Psoas muscle (tissue), 8 donors: ENCODE measurements at regions of chr9 and their contacts with region 1.

Region 1: DNA sequence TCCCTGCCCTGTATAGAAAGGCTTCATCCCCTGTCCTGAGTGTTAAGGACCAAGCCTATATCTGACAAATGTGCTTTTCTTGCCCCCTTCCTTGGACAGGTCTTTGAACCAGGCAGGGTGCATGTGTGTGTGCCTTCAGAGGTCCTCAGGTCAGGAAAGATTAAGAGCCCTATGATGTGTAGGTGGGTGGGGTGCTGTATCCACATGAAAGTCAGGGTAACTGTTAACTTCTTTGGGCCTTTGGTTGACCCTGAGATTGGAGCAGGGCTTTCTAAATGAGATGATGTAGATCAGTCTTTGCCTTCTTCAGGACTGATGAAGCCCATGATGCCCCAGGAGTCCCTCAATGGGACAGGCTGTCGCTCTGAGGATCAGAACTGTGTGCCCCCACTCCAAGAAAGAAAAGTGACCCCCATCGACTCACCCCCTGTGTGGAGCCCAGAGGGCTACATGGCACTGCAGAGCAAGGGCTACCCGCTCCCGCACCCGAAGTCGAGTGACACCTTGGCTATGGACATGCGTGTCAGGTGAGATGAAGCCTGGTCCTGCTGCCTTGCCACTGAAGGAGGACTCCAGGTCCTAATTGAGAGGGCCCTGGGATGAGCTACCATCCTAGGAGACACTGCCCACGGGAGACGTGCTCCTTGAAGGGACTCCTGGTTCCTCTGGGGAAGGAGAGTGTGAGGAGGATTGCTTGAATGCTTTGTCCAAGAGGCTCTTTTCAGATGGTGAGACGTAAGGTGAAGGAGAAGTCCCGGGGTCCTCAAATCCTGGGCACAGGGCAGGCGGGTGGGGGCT is 29.3 kb upstream of the POMT1 start:
- DNase-seq: peak in 1 of 2 donors; percentile 35
- ATAC-seq: no peak
- H3K4me3 ChIP-seq: no peak overlapping the region
- H3K27ac ChIP-seq: no peak overlapping the region
- H3K4me1 ChIP-seq: peaks cover 15% of the 10 kb centered on the region
- H3K27me3 ChIP-seq: no peaks in the 10 kb centered on the region
- CTCF ChIP-seq: no peak

Region 2: DNA sequence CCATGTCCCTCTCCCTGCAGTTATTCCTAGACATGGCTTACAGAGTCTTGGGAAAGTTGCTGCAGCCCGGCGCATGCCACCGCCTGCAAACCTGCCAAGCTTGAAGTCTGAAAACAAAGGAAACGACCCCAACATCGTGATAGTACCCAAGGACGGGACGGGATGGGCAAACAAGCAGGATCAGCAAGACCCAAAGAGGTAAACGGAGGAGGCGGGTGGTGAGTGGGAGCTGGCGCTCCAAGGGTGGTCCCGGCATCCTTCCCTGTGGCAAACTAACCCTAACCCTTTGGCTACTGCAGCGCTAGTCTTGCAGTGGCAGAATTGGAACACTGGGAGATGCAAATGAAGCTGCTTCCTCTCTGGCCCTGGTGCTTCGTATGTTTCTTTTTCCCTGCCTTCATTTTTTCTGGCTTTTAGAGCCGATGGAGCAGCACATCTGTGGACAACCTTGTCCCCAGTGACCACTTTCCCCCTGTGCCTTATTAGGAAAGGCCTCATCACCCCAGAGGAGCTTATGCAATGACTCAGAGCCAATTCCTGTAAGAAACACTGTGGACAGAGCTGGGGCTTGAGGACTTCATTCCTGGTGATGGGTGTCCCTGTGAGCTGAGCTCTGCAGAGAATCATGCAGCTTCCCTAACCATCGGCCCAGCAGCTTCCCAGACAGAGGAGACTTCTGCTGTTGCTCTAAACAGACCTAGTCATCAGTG is 40.6 kb before region 1 on chr9:
- intact Hi-C with region 1: loop called in 1 of 2 experiments (anchors 5 kb)
- DNase-seq: no peak
- ATAC-seq: peak in 2 of 4 donors; percentile 44 to 61
- H3K4me3 ChIP-seq: no peak overlapping the region
- H3K27ac ChIP-seq: no peak overlapping the region
- H3K4me1 ChIP-seq: peaks cover 27% of the 10 kb centered on the region
- H3K27me3 ChIP-seq: no peaks in the 10 kb centered on the region
- CTCF ChIP-seq: no peak

Region 3: GRCh38 chr9:131491001-131491710 is 17.8 kb after region 1 on chr9:
- intact Hi-C with region 1: no loop called
- DNase-seq: no peak
- ATAC-seq: no peak
- H3K4me3 ChIP-seq: no peak overlapping the region
- H3K27ac ChIP-seq: no peak overlapping the region
- H3K4me1 ChIP-seq: no peaks in the 10 kb centered on the region
- H3K27me3 ChIP-seq: no peaks in the 10 kb centered on the region
- CTCF ChIP-seq: no peak